GM13976 (cell line): ENCODE measurements at regions of chr6 and their contacts with region 1.

Region 1: GRCh38 chr6:92777146-92777740 is 642.1 kb downstream of the EPHA7 start:
- DNase-seq: peak; percentile 3
- CTCF ChIP-seq: peak; percentile 36

Region 2: GRCh38 chr6:92122746-92123145 is 654.5 kb before region 1 on chr6:
- in situ Hi-C with region 1: loop called (anchors 25 kb)
- DNase-seq: no peak
- CTCF ChIP-seq: peak; percentile 9

Region 3: DNA sequence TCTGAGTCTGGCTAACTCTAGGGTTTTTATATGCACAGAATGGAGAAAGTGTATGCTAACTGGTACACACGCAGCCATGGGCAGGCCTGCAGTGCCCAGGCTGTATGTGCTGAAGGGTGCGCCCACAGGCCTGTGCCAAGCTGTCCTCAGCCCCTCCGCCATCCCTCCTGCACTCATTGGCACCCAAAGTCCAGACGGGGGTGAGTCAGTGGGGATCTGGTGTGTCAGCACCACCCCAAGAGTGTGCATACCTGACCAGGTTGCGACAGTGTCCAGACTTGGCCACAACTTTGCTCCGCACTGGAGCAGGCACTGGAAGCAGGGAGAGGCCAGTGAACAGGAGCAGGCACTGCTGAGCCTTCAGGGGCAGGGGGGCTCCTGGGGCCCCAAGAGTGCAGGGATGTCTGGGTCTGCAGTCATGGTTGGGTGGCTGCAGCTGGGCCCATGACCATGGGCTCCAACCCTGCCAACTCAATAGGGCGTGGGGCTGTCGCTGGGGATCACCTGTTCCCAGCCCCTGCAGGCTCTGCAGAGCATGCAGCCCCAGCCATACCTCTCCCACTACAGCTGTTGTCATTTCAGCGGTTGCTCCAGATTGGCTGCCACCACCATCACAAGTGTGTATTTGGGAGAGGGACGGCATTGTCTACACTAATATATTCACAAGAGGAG is 75.7 kb before region 1 on chr6:
- in situ Hi-C with region 1: no loop called
- DNase-seq: no peak
- CTCF ChIP-seq: no peak